ENCODE measurements at regions of chr17 and their contacts with region 1.

Region 1: GRCh38 chr17:48970224-48970623 is 1.8 kb upstream of the GIP start:
- DNase-seq: peak in 1 of 2 experiments; percentile 43
- H3K4me3 ChIP-seq: no peak overlapping the region
- H3K4me3 Mint-ChIP-seq: no peak overlapping the region
- H3K27ac Mint-ChIP-seq: peak overlapping the region; percentile 97
- H3K4me1 ChIP-seq: peaks cover 38% of the 10 kb centered on the region
- H3K4me1 Mint-ChIP-seq: peaks cover 46% of the 10 kb centered on the region
- H3K27me3 ChIP-seq: no peaks in the 10 kb centered on the region
- H3K27me3 Mint-ChIP-seq: no peaks in the 10 kb centered on the region
- CTCF ChIP-seq: no peak

Region 2: GRCh38 chr17:48954300-48954755 is 15.9 kb before region 1 on chr17:
- CTCF ChIA-PET with region 1: interaction called, 24 read pairs
- POLR2A ChIA-PET with region 1: interaction called, 7 read pairs
- intact Hi-C with region 1: loop called (anchors 2 kb)
- DNase-seq: peak; percentile 89 to 91
- H3K4me3 ChIP-seq: no peak overlapping the region
- H3K4me3 Mint-ChIP-seq: no peak overlapping the region
- H3K27ac Mint-ChIP-seq: peak overlapping the region; percentile 47
- H3K4me1 ChIP-seq: peaks cover 13% of the 10 kb centered on the region
- H3K4me1 Mint-ChIP-seq: peaks cover 10% of the 10 kb centered on the region
- H3K27me3 ChIP-seq: no peaks in the 10 kb centered on the region
- H3K27me3 Mint-ChIP-seq: no peaks in the 10 kb centered on the region
- CTCF ChIP-seq: peak; percentile 94 to 97

Measured in Caco-2 (cell line).